A549 (cell line): ENCODE measurements at regions of chr1 and their contacts with region 1.

Region 1: DNA sequence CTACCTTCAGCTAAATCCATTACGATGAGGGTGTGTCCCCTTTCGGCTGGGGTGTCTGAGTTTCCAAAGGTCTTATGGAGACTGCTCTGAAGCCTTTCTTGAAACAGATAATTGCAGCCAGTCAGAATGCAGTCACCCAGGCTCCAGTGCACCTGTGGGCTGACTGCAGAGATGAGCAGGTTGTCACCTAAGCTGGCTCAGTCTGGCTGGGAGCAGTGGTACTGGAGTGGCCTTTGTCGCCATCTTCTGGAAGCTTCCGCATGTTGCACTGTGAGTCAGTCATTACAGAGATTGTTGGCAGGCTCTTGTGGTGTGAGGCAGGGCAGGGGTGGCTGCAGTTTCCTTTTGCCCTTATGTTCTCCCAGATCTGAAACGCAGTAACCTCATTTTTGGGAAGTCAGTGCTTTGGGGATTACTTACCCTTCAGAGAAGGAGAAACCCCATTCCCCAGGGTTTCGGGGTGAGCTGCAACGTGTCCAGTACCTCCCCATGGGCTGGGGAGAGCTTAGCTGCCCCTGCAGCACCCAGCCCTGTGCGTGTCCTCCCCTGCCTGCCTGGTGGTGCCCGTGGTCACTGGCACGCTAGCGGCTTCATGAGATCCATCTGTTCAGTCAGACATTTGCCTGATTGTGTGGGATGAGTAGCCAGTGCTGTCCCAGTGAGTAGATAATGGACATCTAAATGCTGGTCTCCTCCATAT is 48.0 kb downstream of the SMYD2 start:
- DNase-seq: peak; percentile 73 to 74
- ATAC-seq: peak; percentile 81 to 89
- H3K4me3 ChIP-seq: no peak overlapping the region
- H3K27ac ChIP-seq: no peak overlapping the region
- H3K4me1 ChIP-seq: no peaks in the 10 kb centered on the region
- CTCF ChIP-seq: peak; percentile 93
- EP300 ChIP-seq: no peak
- POLR2A ChIP-seq: no peak
- RAD21 ChIP-seq: peak; percentile 94 to 97

Region 2: GRCh38 chr1:214205053-214205452 is 123.9 kb before region 1 on chr1:
- CTCF ChIA-PET with region 1: interaction called, 99 read pairs
- POLR2A ChIA-PET with region 1: no interaction called
- DNase-seq: no peak
- ATAC-seq: no peak
- H3K4me3 ChIP-seq: no peak overlapping the region
- H3K27ac ChIP-seq: no peak overlapping the region
- H3K4me1 ChIP-seq: no peaks in the 10 kb centered on the region
- CTCF ChIP-seq: no peak
- EP300 ChIP-seq: no peak
- POLR2A ChIP-seq: no peak
- RAD21 ChIP-seq: no peak

Region 3: DNA sequence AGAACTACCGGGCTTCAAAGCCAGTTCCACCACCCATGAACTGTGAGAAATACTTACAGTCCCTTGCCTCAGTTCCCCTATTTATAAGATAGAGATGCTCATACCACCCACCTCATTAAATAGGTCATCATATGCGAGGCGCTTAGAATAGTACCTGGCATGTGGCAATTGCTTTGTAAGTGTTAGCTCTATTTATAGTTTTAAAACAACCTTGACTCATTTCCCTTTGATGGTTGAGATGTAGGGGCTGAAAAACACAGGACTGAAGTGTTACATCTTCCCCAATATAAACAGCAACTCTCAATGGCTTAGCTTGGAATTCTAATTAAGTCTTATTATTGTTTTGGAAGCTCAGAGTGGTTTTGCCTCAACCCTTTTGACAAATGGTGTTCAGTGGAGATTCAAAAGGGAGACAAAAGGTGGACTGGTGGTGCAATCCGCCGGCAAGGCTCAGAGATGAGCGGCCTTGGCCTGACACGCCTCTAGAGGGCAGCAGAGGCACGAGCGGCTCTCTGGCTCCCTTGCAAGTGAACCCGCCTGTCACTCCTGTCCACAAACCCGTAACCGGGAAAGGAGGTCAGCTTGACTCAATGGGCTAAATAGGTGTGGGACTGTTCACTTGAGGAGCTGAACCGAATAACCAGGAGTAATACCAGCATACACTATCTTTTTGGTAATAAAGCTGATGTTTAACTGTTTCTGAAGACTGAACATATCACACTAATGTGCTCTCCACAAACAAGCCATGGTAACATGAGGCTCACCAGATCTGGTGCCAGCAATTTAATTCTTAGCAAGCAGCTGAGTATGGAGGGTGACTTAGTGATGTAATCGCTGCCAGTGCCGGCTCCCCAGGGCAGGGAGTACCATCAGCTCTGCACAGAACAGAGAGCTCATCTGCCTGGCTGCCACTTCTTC is 67.5 kb before region 1 on chr1:
- CTCF ChIA-PET with region 1: interaction called, 251 read pairs
- POLR2A ChIA-PET with region 1: no interaction called
- DNase-seq: peak; percentile 53 to 79
- ATAC-seq: peak; percentile 96 to 99
- H3K4me3 ChIP-seq: no peak overlapping the region
- H3K27ac ChIP-seq: 0 out of 6 replicates have a peak overlapping the region, but pooled peaks of 1 of the 2 experiments have one; percentile 39
- H3K4me1 ChIP-seq: peaks cover 13% of the 10 kb centered on the region; the same call in 2 of the 3 replicates
- CTCF ChIP-seq: peak; percentile 90
- EP300 ChIP-seq: no peak
- POLR2A ChIP-seq: no peak
- RAD21 ChIP-seq: peak; percentile 84 to 86

Region 4: DNA sequence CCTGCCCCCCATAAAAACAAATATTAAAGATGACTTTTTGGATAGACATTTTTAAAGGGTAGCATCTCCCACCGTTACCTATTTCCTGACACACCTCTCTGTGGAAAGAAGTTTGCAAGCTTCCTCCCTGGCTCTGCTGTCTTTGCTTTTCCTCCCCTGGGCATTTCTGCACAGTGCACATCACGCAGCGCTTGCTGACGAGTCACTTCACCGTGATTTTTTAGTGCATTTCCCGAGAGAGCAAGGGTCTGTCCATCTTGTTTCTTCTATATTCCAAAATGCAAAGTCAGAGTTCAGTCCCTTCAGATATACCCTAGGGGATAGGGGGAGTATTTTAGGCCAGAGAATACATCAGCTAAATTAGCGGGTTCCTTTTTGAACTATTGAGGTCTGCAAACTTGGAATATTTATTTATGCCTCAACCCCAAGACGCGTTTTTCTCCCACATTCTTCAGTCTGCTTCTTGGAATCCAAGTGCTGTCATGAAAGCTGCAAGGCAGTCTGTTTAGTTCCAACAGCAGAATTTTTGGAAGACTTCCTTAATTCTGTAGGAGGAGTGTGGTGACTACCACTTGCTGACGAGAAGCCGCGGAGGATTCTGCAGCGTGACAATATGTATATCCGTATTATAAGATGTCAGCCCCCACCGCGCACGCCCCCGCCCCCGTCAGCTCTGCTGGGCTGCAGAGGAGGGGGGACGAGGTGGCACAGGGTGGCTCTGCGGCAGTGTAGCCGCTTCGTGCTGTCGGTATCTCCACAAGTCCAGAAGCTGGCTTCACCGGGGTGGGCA is 25.6 kb before region 1 on chr1:
- CTCF ChIA-PET with region 1: interaction called, 13 read pairs
- POLR2A ChIA-PET with region 1: no interaction called
- DNase-seq: no peak
- ATAC-seq: no peak
- H3K4me3 ChIP-seq: no peak overlapping the region
- H3K27ac ChIP-seq: no peak overlapping the region
- H3K4me1 ChIP-seq: no peaks in the 10 kb centered on the region
- CTCF ChIP-seq: no peak
- EP300 ChIP-seq: no peak
- POLR2A ChIP-seq: no peak
- RAD21 ChIP-seq: no peak

Region 5: GRCh38 chr1:214386747-214387146 is 57.8 kb after region 1 on chr1:
- CTCF ChIA-PET with region 1: interaction called, 10 read pairs
- POLR2A ChIA-PET with region 1: no interaction called
- DNase-seq: no peak
- ATAC-seq: peak in 1 of 2 experiments; percentile 19; a peak in 1 of 6 replicates
- H3K4me3 ChIP-seq: no peak overlapping the region
- H3K27ac ChIP-seq: no peak overlapping the region
- H3K4me1 ChIP-seq: no peaks in the 10 kb centered on the region
- CTCF ChIP-seq: no peak
- EP300 ChIP-seq: no peak
- POLR2A ChIP-seq: no peak
- RAD21 ChIP-seq: no peak

Region 6: GRCh38 chr1:214621236-214621635 is 292.3 kb after region 1 on chr1:
- CTCF ChIA-PET with region 1: interaction called, 73 read pairs
- POLR2A ChIA-PET with region 1: no interaction called
- DNase-seq: no peak
- ATAC-seq: no peak
- H3K4me3 ChIP-seq: no peak overlapping the region
- H3K27ac ChIP-seq: no peak overlapping the region
- H3K4me1 ChIP-seq: peaks cover 7% of the 10 kb centered on the region; the same call in 1 of the 3 replicates
- CTCF ChIP-seq: no peak
- EP300 ChIP-seq: no peak
- POLR2A ChIP-seq: no peak
- RAD21 ChIP-seq: no peak